Activated CD4-positive, alpha-beta T cell treated with anti-CD3 and anti-CD28 coated beads, Interleukin-2, amount 10 ng/mL, durations not matched to agents 24 days and 14 days (primary cell): ENCODE measurements at regions of chr2 and their contacts with region 1.

Region 1: DNA sequence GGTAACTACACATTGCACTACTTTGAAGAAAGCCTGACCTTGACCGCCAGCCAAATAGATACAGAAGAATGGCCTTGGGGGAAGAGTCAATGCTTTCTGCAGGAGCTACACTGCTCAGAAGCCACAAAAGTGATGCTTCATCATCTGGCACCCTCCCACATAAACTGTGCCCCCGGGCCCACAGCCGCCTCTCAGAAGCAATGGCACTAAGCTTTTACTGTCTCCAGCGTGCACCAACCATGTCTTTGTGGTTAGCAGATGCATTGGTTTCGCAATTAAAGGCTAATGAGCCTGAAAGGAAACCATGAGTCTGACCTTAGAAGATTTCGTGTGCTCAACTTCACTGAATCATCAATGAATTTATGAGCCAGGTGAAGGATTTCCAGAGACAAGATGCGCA is 209.4 kb upstream of the TRIB2 start:
- DNase-seq: peak; percentile 76
- H3K4me3 Mint-ChIP-seq: peak overlapping the region; percentile 57
- H3K27ac Mint-ChIP-seq: peak overlapping the region; percentile 43
- H3K4me1 Mint-ChIP-seq: peaks cover 62% of the 10 kb centered on the region
- H3K27me3 Mint-ChIP-seq: no peaks in the 10 kb centered on the region

Region 2: GRCh38 chr2:12005886-12006681 is 501.2 kb before region 1 on chr2:
- intact Hi-C with region 1: loop called (anchors 10 kb)
- DNase-seq: peak; percentile 86
- H3K4me3 Mint-ChIP-seq: no peak overlapping the region
- H3K27ac Mint-ChIP-seq: no peak overlapping the region
- H3K4me1 Mint-ChIP-seq: peaks cover 8% of the 10 kb centered on the region
- H3K27me3 Mint-ChIP-seq: peaks cover 63% of the 10 kb centered on the region

Region 3: DNA sequence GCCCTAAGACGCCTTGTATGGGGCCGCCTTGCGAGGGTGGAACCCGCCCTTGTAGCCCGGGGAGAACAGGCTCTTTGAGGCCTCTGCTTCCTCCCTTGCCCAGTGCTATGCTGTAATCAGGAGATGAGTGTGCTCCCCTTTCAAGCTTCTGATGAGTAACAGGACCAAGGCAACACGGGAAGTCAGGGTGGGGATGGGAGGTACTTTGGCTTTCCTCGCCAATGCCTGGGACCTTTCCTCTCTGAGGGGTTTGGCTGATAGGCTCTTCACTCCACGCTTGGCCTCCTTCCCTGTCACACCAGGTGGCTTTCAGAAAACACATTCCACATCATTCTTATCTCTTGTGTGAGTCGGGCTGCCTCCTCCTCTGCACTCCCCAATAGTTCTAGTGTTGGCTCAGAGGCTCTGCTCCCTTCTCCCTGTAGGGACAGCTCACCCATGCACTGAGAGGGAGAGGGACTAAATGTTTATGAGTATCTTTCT is 14.2 kb before region 1 on chr2:
- intact Hi-C with region 1: no loop called
- DNase-seq: peak; percentile 69
- H3K4me3 Mint-ChIP-seq: no peak overlapping the region
- H3K27ac Mint-ChIP-seq: peak overlapping the region; percentile 73
- H3K4me1 Mint-ChIP-seq: peaks cover 59% of the 10 kb centered on the region
- H3K27me3 Mint-ChIP-seq: no peaks in the 10 kb centered on the region

Region 4: DNA sequence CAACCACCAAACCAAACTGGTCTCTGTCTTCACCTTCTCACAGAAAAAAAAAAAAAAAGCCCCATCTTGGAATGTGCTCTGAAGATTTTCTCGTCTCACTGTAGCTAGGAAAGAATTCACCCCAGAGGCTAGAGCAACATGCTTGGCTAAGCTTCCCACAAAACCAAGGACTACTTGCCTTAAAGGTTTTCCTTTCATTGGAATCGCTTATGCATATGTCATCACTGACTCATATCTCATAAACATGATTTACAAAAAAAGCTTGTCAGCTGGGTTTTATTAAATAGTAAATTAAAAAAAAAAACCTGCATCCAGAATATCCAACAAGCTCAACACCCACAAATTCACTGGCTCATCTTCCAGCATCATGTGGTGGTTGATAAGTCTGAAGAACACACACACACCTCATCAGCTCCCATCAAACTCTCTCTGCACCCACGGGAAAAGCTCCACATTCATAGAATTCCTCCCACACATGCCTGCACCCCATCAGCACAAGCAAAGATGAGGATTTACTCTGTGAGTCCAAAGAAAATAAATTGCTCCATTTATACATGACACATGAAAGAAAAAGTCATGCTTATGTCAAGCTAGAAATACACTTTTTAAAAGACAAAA is 27.5 kb after region 1 on chr2:
- intact Hi-C with region 1: loop called (anchors 2 kb)
- DNase-seq: peak; percentile 46
- H3K4me3 Mint-ChIP-seq: peak overlapping the region; percentile 38
- H3K27ac Mint-ChIP-seq: no peak overlapping the region
- H3K4me1 Mint-ChIP-seq: peaks cover 21% of the 10 kb centered on the region
- H3K27me3 Mint-ChIP-seq: peaks cover 6% of the 10 kb centered on the region

Region 5: GRCh38 chr2:12555012-12555645 is 47.8 kb after region 1 on chr2:
- intact Hi-C with region 1: loop called (anchors 1 kb)
- DNase-seq: peak; percentile 59
- H3K4me3 Mint-ChIP-seq: peak overlapping the region; percentile 57
- H3K27ac Mint-ChIP-seq: peak overlapping the region; percentile 88
- H3K4me1 Mint-ChIP-seq: peaks cover 39% of the 10 kb centered on the region
- H3K27me3 Mint-ChIP-seq: no peaks in the 10 kb centered on the region

Region 6: GRCh38 chr2:12737738-12738485 is 230.6 kb after region 1 on chr2:
- intact Hi-C with region 1: no loop called
- DNase-seq: no peak
- H3K4me3 Mint-ChIP-seq: no peak overlapping the region
- H3K27ac Mint-ChIP-seq: no peak overlapping the region
- H3K4me1 Mint-ChIP-seq: peaks cover 7% of the 10 kb centered on the region
- H3K27me3 Mint-ChIP-seq: no peaks in the 10 kb centered on the region

Region 7: DNA sequence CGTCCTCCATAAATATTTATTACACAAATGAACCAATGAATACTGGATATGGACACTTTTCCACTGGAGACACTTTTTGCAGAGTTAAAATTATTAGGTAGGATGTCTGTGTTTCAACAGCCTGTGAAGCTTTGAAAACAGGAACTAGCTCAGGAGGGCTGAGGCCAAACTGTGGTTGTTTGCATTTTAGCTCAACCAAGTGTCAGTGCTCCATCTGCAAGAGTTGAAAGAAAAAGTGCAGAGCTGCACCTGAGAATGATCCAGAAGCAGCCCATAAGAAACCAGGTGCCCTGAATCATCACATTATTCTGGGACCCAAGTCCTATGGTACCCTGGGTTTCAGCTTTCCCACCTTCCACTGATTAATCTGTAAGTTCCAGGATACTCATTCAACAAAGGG is 389.9 kb after region 1 on chr2:
- intact Hi-C with region 1: no loop called
- DNase-seq: peak; percentile 67
- H3K4me3 Mint-ChIP-seq: no peak overlapping the region
- H3K27ac Mint-ChIP-seq: no peak overlapping the region
- H3K4me1 Mint-ChIP-seq: peaks cover 8% of the 10 kb centered on the region
- H3K27me3 Mint-ChIP-seq: peaks cover 12% of the 10 kb centered on the region